A673 (cell line): ENCODE measurements at regions of chr3 and their contacts with region 1.

Region 1: DNA sequence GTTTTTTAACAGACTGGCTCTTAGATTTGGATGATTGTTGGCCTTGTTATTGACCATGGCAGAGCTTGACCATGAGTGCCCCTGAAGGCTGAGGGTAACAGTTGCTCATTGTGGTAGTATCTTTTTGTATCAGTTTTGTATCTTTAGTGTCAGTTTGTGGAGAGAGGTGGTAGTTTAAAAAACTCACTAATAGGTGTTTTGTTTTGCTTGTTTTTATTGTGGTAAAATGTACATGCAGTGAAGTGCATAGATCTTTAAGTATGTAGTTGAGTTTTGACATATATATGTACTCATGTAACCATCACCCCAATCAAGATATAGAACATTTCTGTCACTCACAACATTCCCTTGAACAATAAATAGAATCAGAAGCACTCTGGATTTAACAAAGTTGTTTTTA is 9.8 kb downstream of the GMPS start:
- DNase-seq: no peak
- H3K4me3 ChIP-seq: no peak overlapping the region
- H3K27ac ChIP-seq: no peak overlapping the region
- H3K4me1 ChIP-seq: peaks cover 7% of the 10 kb centered on the region
- H3K27me3 ChIP-seq: no peaks in the 10 kb centered on the region
- CTCF ChIP-seq: no peak

Region 2: DNA sequence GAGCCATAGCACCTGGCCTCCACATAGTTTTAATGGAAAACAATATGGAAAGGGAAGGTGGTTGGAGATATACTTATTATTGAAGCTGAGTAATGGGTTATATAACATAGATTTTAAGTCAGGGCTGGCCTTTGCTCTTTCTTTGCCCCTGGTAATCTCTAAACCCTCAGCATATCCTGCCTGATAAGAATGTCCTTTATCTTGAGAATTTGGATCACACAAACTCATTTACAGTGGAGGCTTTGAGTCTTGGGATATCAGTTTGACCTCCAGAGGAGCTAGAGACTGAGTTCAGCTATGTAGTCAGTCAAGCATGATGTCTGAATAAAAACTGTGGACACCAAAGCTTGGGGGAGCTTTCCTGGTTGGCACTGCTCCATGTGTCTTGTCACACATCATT is 65.3 kb before region 1 on chr3:
- CTCF ChIA-PET with region 1: no interaction called
- POLR2A ChIA-PET with region 1: no interaction called
- intact Hi-C with region 1: loop called (anchors 5 kb)
- DNase-seq: no peak
- H3K4me3 ChIP-seq: no peak overlapping the region
- H3K27ac ChIP-seq: no peak overlapping the region
- H3K4me1 ChIP-seq: no peaks in the 10 kb centered on the region
- H3K27me3 ChIP-seq: no peaks in the 10 kb centered on the region
- CTCF ChIP-seq: no peak